HEK293T (cell line): ENCODE measurements at regions of chr17 and their contacts with region 1.

Region 1: GRCh38 chr17:48131216-48131824 is 23.8 kb downstream of the SNX11 start:
- DNase-seq: peak; percentile 82

Region 2: GRCh38 chr17:48148029-48148770 is 16.9 kb after region 1 on chr17:
- CTCF ChIA-PET with region 1: interaction called, 16 read pairs
- POLR2A ChIA-PET with region 1: interaction called, 3 read pairs
- DNase-seq: no peak

Region 3: GRCh38 chr17:48175692-48176470 is 44.6 kb after region 1 on chr17:
- CTCF ChIA-PET with region 1: no interaction called
- POLR2A ChIA-PET with region 1: no interaction called
- DNase-seq: no peak

Region 4: DNA sequence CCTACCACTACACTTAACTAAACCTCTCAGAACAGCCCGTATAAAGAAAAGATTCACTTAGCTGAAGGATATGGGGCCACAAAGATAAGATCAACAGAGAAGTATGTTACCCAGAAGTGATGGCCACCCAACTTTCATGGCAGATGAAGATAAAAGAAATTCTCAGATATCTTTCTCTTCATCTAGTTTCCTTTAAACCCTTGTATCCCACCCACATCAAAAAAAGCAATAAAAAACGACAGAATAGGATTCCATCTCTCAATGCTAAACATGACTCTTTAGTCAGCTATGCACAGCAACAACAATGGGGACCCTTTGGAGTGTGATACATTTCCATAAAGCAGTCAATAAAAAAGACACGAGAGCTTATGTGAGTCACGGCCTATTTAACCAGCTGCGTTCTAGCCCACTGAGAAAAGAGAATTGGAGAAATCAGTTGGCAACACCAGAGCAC is 62.8 kb after region 1 on chr17:
- CTCF ChIA-PET with region 1: no interaction called
- POLR2A ChIA-PET with region 1: no interaction called
- DNase-seq: no peak